ENCODE measurements at regions of chr2 and their contacts with region 1.

Region 1: GRCh38 chr2:16727256-16727655 is 61.6 kb upstream of the CYRIA start:
- DNase-seq: peak; percentile 40

Region 2: DNA sequence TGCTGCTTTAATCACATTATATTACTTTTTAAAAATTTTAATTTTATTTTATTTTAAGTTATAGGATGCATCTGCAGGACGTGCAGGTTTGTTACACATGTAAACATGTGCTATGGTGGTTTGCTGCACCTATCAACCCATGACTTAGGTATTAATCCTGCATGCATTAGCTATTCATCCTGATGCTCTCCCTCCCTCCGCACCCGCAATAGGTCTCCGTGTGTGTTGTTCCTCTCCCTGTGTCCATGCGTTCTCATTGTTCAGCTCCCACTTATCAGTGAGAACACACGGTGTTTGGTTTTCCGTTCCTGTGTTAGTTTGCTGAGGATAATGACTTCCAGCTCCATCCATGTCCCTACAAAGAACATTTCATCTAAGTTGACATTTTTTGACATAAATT is 344.8 kb before region 1 on chr2:
- in situ Hi-C with region 1: no loop called
- DNase-seq: no peak

Region 3: DNA sequence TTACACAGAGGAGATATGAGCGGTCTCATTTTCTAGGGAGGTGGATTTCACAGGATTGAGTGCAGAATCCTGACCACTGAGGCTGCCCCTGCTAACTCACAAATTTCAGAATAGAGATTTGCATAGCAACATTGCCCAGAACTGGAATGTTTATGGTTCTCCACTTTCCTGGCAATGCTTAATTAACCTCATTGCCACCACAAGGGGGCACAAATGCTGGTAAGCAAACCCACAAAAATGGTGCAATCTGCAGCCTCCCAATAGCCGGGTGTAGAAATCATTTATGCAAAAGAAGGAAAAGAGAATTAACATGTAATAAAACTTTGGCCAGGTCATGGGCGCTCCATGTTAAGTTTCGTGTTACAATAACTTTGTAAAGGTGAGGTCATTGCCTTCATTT is 174.0 kb before region 1 on chr2:
- in situ Hi-C with region 1: loop called (anchors 25 kb)
- DNase-seq: peak; percentile 54

Region 4: GRCh38 chr2:17272652-17273525 is 545.6 kb after region 1 on chr2:
- in situ Hi-C with region 1: no loop called
- DNase-seq: no peak

Measured in ACHN (cell line).